PC-9 (cell line): ENCODE measurements at regions of chr12 and their contacts with region 1.

Region 1: DNA sequence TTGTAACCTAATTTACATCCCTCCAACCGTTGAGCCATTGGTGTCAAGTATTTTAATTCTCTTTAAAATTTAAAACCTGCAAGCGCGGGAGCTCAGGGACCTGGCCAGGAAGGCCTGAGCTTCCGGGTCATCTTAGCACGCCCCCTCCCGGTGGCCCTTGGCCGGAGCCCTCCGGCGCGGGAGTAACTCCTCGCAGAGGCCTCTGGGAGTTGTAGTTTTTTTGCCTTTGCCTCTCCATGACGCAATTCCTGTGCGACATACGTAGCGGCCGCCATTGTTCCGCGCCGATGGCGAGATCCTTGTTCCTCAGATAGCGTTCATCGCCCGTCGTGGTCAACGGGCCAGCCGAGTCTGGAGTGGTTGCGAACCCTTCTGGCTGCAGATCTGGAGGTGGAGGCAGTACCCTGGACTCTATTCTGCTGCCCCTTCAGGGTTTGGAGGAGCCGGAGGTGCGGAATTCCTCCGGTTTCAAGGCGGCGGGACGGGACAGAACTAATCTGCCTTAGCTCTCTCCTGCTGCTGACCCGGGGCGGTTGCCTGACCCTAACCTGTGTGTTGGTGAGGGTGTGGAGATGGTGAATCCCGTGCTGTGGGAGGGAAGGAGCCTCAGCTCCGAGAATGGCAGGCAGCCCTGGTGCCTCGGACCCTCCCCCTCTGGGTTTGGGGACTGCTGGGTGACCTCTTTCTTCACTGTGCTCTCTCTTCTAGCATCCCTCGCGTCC is at the start of gene ZNF268:
- DNase-seq: peak; percentile 79 to 91
- H3K4me3 ChIP-seq: peak within 1 kb of the TSS; percentile 65
- H3K27ac ChIP-seq: peak within 1 kb of the TSS; percentile 40; the same call in 1 of the 2 replicates
- H3K4me1 ChIP-seq: no peaks in the 10 kb centered on the region
- H3K27me3 ChIP-seq: no peaks in the 10 kb centered on the region
- CTCF ChIP-seq: peak; percentile 84
- total RNA-seq, gene ZNF268: 14.0 and 14.7 TPM in 2 replicates

Region 2: GRCh38 chr12:132948146-132949066 is 233.0 kb before region 1 on chr12:
- CTCF ChIA-PET with region 1: no interaction called
- POLR2A ChIA-PET with region 1: no interaction called
- intact Hi-C with region 1: no loop called
- DNase-seq: no peak
- H3K4me3 ChIP-seq: no peak overlapping the region
- H3K27ac ChIP-seq: no peak overlapping the region
- H3K4me1 ChIP-seq: no peaks in the 10 kb centered on the region
- H3K27me3 ChIP-seq: no peaks in the 10 kb centered on the region
- CTCF ChIP-seq: no peak

Region 3: GRCh38 chr12:133037207-133038005 is 144.0 kb before region 1 on chr12 and contains the start of gene ZNF84:
- CTCF ChIA-PET with region 1: no interaction called
- POLR2A ChIA-PET with region 1: no interaction called
- intact Hi-C with region 1: loop called (anchors 1 kb)
- DNase-seq: peak; percentile 88 to 92
- H3K4me3 ChIP-seq: peak within 1 kb of the TSS; percentile 80
- H3K27ac ChIP-seq: peak within 1 kb of the TSS; percentile 80
- H3K4me1 ChIP-seq: no peaks in the 10 kb centered on the region
- H3K27me3 ChIP-seq: no peaks in the 10 kb centered on the region; the same call in 1 of the 2 replicates
- CTCF ChIP-seq: no peak
- total RNA-seq, gene ZNF84: 16.2 and 18.0 TPM in 2 replicates

Region 4: DNA sequence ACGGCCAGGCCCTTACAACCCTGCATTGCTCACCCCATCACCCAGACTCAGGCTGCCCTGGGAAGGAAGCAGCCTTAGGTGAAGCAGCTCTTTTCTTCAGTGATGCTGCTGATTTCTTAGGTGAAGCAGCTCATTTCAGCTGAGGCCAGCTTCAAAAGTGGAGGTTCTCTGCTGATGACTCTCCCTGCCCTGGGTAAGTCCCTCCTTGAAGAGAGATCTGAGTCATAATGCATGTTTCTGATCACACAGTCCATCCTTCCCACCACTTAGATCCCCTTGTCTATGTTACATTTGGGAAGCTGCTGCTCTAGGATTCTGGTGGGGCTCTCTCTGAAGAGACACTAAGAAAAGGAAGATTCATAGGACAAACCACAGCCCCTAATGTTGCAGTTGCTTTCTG is 117.8 kb before region 1 on chr12:
- CTCF ChIA-PET with region 1: no interaction called
- POLR2A ChIA-PET with region 1: no interaction called
- intact Hi-C with region 1: no loop called
- DNase-seq: no peak
- H3K4me3 ChIP-seq: no peak overlapping the region
- H3K27ac ChIP-seq: no peak overlapping the region
- H3K4me1 ChIP-seq: no peaks in the 10 kb centered on the region
- H3K27me3 ChIP-seq: no peaks in the 10 kb centered on the region
- CTCF ChIP-seq: no peak

Region 5: GRCh38 chr12:133080368-133081158 is 100.8 kb before region 1 on chr12 and contains the start of gene ZNF140:
- CTCF ChIA-PET with region 1: no interaction called
- POLR2A ChIA-PET with region 1: interaction called, 4 read pairs
- intact Hi-C with region 1: loop called (anchors 1 kb)
- DNase-seq: peak; percentile 87 to 92
- H3K4me3 ChIP-seq: peak within 1 kb of the TSS; percentile 85
- H3K27ac ChIP-seq: peak within 1 kb of the TSS; percentile 96
- H3K4me1 ChIP-seq: peaks cover 7% of the 10 kb centered on the region; the same call in 1 of the 2 replicates
- H3K27me3 ChIP-seq: no peaks in the 10 kb centered on the region
- CTCF ChIP-seq: peak; percentile 42; the same call in 1 of the 2 replicates
- total RNA-seq, gene ZNF140: 10.2 and 11.1 TPM in 2 replicates

Region 6: GRCh38 chr12:133130038-133130807 is 51.2 kb before region 1 on chr12 and contains the starts of genes ZNF10 and ZNF891:
- CTCF ChIA-PET with region 1: no interaction called
- POLR2A ChIA-PET with region 1: no interaction called
- intact Hi-C with region 1: loop called (anchors 2 kb)
- DNase-seq: peak; percentile 79 to 96
- H3K4me3 ChIP-seq: peak within 1 kb of the TSS; percentile 98
- H3K27ac ChIP-seq: peak within 1 kb of the TSS; percentile 80
- H3K4me1 ChIP-seq: peaks cover 9% of the 10 kb centered on the region; the same call in 1 of the 2 replicates
- H3K27me3 ChIP-seq: no peaks in the 10 kb centered on the region
- CTCF ChIP-seq: no peak
- total RNA-seq, gene ZNF10: 7.3 and 9.5 TPM in 2 replicates
- total RNA-seq, gene ZNF891: 2.4 and 3.2 TPM in 2 replicates